Left ventricle myocardium inferior (tissue), 1 donor: ENCODE measurements at regions of chr10 and their contacts with region 1.

Region 1: DNA sequence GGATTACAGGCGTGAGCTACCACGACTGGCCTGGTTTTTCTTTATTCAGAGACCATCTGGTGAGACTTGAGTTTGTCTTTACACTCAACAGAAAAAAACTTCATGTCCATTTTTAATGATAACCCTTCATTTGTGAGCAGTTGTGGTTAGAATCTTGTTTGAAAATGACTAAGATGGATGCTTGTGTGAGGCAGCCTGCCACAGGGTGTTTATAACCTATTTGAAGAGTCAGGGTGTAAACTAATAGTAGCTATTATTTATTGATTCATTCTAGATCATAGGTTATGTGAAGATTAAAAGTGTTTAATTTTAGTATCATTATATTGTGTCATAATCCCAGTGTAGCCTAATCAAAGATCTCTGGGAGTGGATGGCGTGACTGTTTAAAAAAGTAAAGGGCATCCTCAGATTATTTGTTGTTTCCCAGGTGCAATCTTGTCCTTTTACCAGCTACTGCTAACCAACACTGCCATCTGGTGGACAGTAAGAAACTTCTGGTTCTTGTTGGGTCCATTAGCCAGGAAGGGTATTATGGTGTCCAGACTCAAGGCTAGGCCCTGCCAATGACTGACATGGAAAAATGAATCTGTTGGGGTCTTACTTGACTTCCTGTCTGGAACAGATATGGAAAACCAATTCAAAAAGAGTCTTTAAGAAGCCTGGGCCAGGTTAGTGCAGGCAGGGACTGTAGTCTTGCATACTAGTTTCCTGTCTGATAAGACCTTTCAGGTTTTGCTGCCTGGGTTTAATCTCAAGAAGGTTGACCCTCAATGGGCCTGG is 24.9 kb downstream of the NRBF2 start:
- DNase-seq: no peak
- H3K4me3 ChIP-seq: no peak overlapping the region
- H3K27ac ChIP-seq: no peak overlapping the region
- H3K4me1 ChIP-seq: peaks cover 20% of the 10 kb centered on the region
- H3K27me3 ChIP-seq: no peaks in the 10 kb centered on the region
- CTCF ChIP-seq: peak; percentile 85

Region 2: GRCh38 chr10:62934258-62934657 is 223.8 kb before region 1 on chr10:
- intact Hi-C with region 1: no loop called
- DNase-seq: no peak
- H3K4me3 ChIP-seq: no peak overlapping the region
- H3K27ac ChIP-seq: peak overlapping the region; percentile 33
- H3K4me1 ChIP-seq: no peaks in the 10 kb centered on the region
- H3K27me3 ChIP-seq: peaks cover 17% of the 10 kb centered on the region
- CTCF ChIP-seq: no peak

Region 3: DNA sequence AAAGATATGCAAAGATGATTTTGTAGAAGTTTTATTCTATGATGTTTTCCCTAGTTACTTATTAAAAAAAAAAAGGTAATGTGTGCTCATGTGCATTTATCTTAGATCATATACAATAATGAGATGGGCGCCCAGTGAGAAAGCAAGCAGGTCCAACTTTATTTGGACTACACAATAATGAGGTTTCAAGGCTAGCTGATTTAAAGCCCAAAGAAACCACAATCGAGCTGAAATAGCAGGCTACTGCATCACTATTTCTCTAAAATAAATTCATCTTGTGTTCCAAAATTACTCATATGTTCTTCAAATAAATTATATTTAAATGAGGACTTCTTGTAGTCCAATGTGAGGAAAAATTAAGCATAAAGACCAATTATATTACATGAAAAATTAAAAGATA is 197.6 kb after region 1 on chr10:
- intact Hi-C with region 1: no loop called
- DNase-seq: no peak
- H3K4me3 ChIP-seq: no peak overlapping the region
- H3K27ac ChIP-seq: no peak overlapping the region
- H3K4me1 ChIP-seq: peaks cover 6% of the 10 kb centered on the region
- H3K27me3 ChIP-seq: no peaks in the 10 kb centered on the region
- CTCF ChIP-seq: no peak

Region 4: DNA sequence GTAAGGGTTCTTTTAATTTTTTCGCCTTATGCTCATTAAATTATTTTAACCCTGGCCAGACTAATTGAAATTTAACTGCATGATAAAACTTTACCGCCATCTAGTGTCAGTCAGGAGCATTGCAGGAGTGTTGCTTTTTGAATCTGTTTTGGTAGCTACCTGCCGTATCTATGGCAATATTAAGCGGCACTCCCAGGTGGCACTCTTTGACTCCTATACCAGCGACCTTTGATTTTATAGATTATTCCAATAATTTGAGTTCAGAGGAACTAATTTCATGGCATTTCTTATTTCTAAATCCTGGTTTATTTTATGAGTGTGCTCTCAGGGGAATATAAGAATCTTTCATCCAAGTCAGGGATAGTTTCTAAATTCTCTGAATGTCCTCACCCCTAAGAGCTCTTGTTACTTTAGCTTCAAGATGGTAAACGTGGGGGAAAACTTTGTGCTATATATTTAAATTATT is 562.1 kb after region 1 on chr10:
- intact Hi-C with region 1: loop called (anchors 2 kb)
- DNase-seq: no peak
- H3K4me3 ChIP-seq: no peak overlapping the region
- H3K27ac ChIP-seq: peak overlapping the region; percentile 18
- H3K4me1 ChIP-seq: peaks cover 27% of the 10 kb centered on the region
- H3K27me3 ChIP-seq: no peaks in the 10 kb centered on the region
- CTCF ChIP-seq: peak; percentile 99